ENCODE measurements at regions of chr12 and their contacts with region 1.

Region 1: DNA sequence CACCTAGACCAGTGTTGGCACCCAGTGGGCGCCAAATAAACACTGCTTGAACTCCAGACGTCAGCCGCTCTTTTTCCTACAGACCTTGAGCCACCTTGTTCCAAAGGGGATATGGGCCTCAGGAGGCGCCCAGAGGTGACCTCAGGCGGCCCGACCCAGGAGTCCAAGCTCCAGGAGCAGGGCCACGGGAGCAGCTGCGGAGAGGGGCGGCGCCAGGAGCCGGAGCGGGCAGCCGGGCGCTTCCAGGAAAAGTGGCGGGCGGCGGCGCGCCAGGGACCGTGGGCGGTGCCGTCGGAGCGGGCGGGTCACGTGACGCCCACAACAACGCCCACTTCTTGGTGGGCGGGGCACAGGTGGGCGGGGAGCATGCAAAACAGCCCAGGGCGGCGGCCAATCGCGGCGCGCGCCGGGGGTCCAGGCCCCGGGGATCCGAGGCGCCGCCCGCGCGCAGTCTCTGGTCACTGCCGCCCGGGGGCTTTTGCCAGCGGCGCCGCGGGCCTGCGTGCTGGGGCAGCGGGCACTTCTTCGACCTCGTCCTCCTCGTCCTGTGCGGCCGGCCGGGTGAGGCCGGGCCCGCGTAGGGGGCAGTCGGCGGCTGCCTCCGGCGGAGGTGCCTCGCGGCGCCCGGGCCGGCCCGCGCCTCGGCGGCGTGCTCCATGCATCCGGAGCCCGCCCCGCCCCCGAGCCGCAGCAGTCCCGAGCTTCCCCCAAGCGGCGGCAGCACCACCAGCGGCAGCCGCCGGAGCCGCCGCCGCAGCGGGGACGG is at the start of gene ORAI1:
- DNase-seq: peak; percentile 90 to 93 (median 92)
- H3K4me3 ChIP-seq: peak within 1 kb of the TSS; percentile 81 to 87 (median 86)
- H3K4me3 Mint-ChIP-seq: peak within 1 kb of the TSS; percentile 90 to 94
- H3K27ac ChIP-seq: peak within 1 kb of the TSS; percentile 82
- H3K27ac Mint-ChIP-seq: peak within 1 kb of the TSS; percentile 83 to 95 (median 90)
- H3K4me1 ChIP-seq: peaks cover 48 to 52% of the 10 kb centered on the region in 2 donors
- H3K4me1 Mint-ChIP-seq: peaks cover 52% of the 10 kb centered on the region
- H3K27me3 ChIP-seq: no peaks in the 10 kb centered on the region
- H3K27me3 Mint-ChIP-seq: peaks cover 0 to 2% (median 0%) of the 10 kb centered on the region in 3 donors
- CTCF ChIP-seq: no peak
- polyA plus RNA-seq, gene ORAI1: 36.4 to 77.9 (median 54.6) TPM

Region 2: GRCh38 chr12:121314431-121314830 is 311.8 kb before region 1 on chr12:
- intact Hi-C with region 1: no loop called
- DNase-seq: peak; percentile 67 to 85 (median 82)
- H3K4me3 ChIP-seq: no peak overlapping the region
- H3K4me3 Mint-ChIP-seq: peak overlapping the region in 1 of 2 donors; percentile 60
- H3K27ac ChIP-seq: peak overlapping the region; percentile 39 to 76
- H3K27ac Mint-ChIP-seq: peak overlapping the region; percentile 79 to 95 (median 92)
- H3K4me1 ChIP-seq: peaks cover 12 to 22% of the 10 kb centered on the region in 2 donors
- H3K4me1 Mint-ChIP-seq: peaks cover 25% of the 10 kb centered on the region
- H3K27me3 ChIP-seq: no peaks in the 10 kb centered on the region
- H3K27me3 Mint-ChIP-seq: no peaks in the 10 kb centered on the region
- CTCF ChIP-seq: peak; percentile 27

Region 3: GRCh38 chr12:121494093-121494787 is 132.0 kb before region 1 on chr12:
- intact Hi-C with region 1: loop called in 1 of 2 experiments (anchors 5 kb)
- DNase-seq: peak; percentile 18 to 43 (median 30)
- H3K4me3 ChIP-seq: no peak overlapping the region
- H3K4me3 Mint-ChIP-seq: no peak overlapping the region
- H3K27ac ChIP-seq: no peak overlapping the region
- H3K27ac Mint-ChIP-seq: no peak overlapping the region
- H3K4me1 ChIP-seq: peaks cover 27 to 32% of the 10 kb centered on the region in 2 donors
- H3K4me1 Mint-ChIP-seq: peaks cover 30% of the 10 kb centered on the region
- H3K27me3 ChIP-seq: no peaks in the 10 kb centered on the region
- H3K27me3 Mint-ChIP-seq: no peaks in the 10 kb centered on the region
- CTCF ChIP-seq: peak; percentile 93

Region 4: DNA sequence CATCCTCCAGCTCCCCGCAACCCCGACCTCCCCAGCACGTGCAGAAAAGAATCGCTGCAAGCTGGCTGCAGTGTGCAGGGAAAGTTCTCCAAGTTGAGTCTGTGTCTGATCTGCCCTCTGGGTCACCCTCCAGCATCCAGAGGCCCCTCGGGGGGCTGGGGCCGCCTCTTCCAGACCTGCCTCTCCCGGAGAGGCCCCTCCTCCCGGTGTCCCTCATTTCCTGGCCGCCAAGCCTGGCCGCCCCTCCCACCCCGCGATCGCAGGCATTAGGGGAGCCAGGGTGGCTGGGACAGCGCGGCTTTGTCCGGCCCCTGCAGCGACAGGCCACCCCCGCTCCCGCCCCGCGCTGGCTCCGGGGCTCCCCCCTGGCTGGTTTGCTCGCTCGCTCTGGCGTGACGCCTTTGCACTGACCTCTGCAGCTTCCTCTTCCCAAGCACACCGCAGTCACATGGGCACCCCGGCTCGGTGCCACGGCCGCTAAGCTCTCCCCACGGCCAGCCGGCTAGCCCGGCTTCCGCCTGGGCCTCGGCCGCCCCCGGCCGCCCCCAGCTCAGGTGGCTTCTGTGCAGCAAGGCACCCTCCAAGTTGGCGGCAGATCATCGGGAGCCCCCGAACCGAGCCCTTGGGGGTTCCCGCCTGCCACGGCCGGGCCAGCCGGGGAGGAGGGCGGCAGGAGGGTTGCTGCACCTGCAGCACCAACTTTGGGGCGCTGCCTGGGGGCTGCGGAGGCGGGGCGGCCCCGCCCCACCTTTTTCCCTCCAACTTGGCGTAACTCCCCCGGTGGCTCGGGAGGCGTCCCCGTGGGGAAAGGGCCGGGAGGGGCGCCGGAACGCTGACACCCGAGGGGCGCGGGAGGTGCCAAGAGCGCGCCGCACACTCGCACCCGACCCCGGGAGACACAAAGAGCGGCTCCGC is 89.1 kb before region 1 on chr12:
- intact Hi-C with region 1: loop called in 1 of 2 experiments (anchors 5 kb)
- DNase-seq: peak; percentile 88 to 93 (median 89)
- H3K4me3 ChIP-seq: peak overlapping the region; percentile 51 to 78 (median 71)
- H3K4me3 Mint-ChIP-seq: peak overlapping the region; percentile 79 to 80
- H3K27ac ChIP-seq: peak overlapping the region; percentile 89 to 90
- H3K27ac Mint-ChIP-seq: peak overlapping the region; percentile 84 to 94 (median 91)
- H3K4me1 ChIP-seq: peaks cover 35 to 55% of the 10 kb centered on the region in 2 donors
- H3K4me1 Mint-ChIP-seq: peaks cover 50% of the 10 kb centered on the region
- H3K27me3 ChIP-seq: no peaks in the 10 kb centered on the region
- H3K27me3 Mint-ChIP-seq: peaks cover 0 to 3% (median 1%) of the 10 kb centered on the region in 3 donors
- CTCF ChIP-seq: no peak

Region 5: GRCh38 chr12:121550974-121551634 is 75.2 kb before region 1 on chr12:
- intact Hi-C with region 1: loop called (anchors 5 kb)
- DNase-seq: no peak
- H3K4me3 ChIP-seq: no peak overlapping the region
- H3K4me3 Mint-ChIP-seq: no peak overlapping the region
- H3K27ac ChIP-seq: no peak overlapping the region
- H3K27ac Mint-ChIP-seq: peak overlapping the region in 1 of 7 donors; percentile 30
- H3K4me1 ChIP-seq: peaks cover 19% of the 10 kb centered on the region in 2 donors
- H3K4me1 Mint-ChIP-seq: peaks cover 18% of the 10 kb centered on the region
- H3K27me3 ChIP-seq: no peaks in the 10 kb centered on the region
- H3K27me3 Mint-ChIP-seq: peaks cover 0 to 2% (median 0%) of the 10 kb centered on the region in 3 donors
- CTCF ChIP-seq: no peak

Region 6: GRCh38 chr12:121579981-121580868 is 46.0 kb before region 1 on chr12:
- intact Hi-C with region 1: loop called (anchors 5 kb)
- DNase-seq: peak in 1 of 3 donors; percentile 56
- H3K4me3 ChIP-seq: peak overlapping the region; percentile 68 to 89 (median 69)
- H3K4me3 Mint-ChIP-seq: peak overlapping the region; percentile 93 to 98
- H3K27ac ChIP-seq: peak overlapping the region; percentile 46 to 90
- H3K27ac Mint-ChIP-seq: peak overlapping the region; percentile 90 to 98 (median 96)
- H3K4me1 ChIP-seq: peaks cover 51 to 59% of the 10 kb centered on the region in 2 donors
- H3K4me1 Mint-ChIP-seq: peaks cover 38% of the 10 kb centered on the region
- H3K27me3 ChIP-seq: no peaks in the 10 kb centered on the region
- H3K27me3 Mint-ChIP-seq: peaks cover 4 to 12% (median 8%) of the 10 kb centered on the region in 3 donors
- CTCF ChIP-seq: no peak

Region 7: DNA sequence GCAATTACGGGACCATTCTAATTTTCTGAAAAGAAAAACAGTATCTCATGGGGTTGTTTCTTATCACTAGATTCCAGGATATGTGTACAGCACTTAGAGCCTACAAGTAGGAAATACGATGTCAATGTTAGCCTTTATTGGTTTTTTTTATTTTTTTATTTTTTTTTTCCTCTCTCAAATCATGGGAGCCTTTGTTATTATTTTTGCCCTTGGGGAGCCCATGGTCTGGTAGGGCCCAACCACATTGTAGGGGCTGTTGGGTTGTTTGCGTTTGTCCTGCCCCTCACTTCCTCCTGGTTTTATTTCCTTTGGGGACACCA is 37.3 kb after region 1 on chr12:
- intact Hi-C with region 1: loop called (anchors 5 kb)
- DNase-seq: no peak
- H3K4me3 ChIP-seq: peak overlapping the region; percentile 12 to 93 (median 88)
- H3K4me3 Mint-ChIP-seq: peak overlapping the region; percentile 93 to 100
- H3K27ac ChIP-seq: peak overlapping the region; percentile 81 to 96
- H3K27ac Mint-ChIP-seq: peak overlapping the region; percentile 84 to 99 (median 99)
- H3K4me1 ChIP-seq: peaks cover 62 to 77% of the 10 kb centered on the region in 2 donors
- H3K4me1 Mint-ChIP-seq: peaks cover 72% of the 10 kb centered on the region
- H3K27me3 ChIP-seq: no peaks in the 10 kb centered on the region
- H3K27me3 Mint-ChIP-seq: peaks cover 0 to 3% (median 0%) of the 10 kb centered on the region in 3 donors
- CTCF ChIP-seq: no peak

Measured in CD14-positive monocyte (primary cell).